ENCODE measurements at regions of chr10 and their contacts with region 1.

Region 1: GRCh38 chr10:24784061-24784460 is 60.4 kb upstream of the ARHGAP21 start:
- DNase-seq: peak; percentile 72 to 98 (median 88)

Region 2: DNA sequence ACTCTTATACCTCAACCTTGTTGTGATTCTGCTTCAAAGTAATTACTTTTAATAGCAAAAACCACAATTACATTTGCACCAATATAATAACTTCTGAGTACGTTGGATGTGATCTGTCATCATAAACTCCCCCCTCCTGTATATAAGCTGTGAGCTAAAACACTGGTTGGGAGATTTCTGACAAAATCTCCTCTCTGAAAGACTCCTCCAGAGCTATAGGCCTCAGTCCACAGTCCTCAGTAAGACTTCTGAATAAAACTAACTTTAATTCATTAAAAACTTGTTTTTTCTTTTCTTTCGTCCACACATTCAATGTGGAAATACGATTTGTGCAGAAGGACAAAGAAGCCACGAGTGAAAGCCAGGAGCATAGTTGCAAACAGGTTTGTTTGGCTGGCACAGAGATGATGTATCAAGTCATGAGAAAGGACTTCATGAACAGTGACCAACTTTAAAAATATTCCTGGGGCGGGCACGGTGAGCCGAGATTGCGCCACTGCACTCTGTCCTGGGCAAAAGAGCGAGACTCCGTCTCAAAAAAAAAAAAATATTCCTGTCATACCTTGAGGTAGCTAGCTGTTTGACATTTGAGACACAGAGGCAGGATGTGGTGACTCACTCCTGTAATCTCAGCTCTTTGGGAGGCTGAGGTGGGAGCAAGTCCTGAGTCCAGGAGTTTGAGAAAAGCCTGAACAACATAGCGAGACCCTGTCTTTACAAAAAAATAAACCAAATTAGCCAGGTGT is 30.7 kb after region 1 on chr10:
- intact Hi-C with region 1: loop called (anchors 2 kb)
- DNase-seq: no peak

Region 3: DNA sequence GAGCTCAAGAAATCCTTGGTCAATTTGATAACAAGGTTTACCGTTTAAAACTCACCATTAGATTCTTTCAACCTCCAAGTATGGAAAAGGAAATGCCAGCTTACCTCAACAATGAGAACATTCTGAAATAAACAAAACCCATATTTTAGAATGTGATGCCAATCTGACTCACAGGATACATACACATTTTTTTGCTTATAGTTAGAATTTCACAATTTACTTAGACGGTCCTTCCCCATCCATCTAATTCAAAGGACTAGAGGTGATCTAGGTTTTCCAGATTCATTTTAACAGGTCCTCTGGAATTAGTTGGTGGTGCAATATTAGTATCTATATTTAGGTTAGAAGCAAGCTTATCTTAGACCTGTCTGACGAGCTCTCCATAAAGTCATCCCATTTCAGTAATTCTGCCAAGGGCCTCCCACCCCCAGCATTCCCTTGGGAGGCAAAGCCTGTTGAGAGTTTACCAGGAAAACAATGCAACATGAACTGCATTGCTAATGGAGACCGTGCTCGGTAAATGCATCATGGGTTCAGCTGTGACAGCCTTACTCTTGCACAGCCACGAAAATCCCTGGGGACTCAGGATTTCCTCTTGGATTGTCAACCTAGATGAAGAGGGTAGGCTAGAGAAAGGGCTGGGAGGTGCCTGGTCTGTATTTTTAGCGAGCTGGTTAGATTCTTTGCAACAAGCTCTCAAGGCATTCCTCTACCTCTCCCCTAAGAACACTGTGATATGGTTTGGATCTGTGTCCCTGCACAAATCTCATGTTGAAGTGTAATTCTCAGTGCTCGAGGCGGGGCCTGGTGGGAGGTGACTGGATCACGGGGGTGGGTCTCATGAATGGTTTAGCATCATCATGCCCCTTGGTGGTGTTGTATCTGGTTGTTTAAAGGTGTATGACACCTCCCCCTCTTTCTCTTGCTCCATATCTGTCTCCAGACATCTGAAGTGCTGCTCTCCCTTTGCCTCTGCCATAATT is 74.5 kb after region 1 on chr10:
- intact Hi-C with region 1: no loop called
- DNase-seq: no peak

Region 4: DNA sequence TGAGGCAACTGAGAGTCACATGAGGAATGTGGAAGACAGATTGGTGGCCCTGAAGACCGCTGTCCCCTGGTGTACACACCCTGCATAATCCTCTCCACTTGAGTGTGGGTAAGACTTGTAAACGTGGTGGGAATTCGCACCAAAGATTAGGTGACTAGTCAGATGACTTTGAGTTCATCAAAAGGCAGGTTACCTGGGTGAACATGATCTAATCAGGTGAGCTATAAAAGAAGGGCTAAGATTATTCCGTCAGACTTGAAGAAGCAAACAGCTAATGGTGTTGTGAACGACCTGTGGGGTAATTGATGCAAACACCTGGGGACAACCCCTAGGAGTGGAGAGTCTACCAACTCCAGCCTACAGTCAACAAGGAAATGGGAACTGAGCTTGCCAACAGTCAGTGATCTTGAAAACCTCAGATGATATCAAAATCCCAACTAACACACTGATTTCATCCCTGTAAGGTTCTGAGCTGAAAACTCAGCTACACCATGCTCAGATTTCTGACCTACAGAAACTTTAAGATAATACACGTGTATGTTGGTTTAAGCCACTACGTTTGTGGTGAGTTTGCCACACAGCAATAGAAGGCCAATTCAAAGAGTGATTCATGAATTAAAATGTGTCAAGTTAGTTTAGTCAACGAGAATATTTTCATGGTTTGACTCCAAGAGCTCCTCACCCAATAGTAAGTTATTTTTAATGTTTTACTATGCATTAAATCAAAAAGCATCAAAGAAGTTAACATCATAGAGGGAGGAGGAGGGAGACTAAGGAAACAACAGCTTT is 151.6 kb after region 1 on chr10:
- intact Hi-C with region 1: no loop called
- DNase-seq: no peak

Measured in posterior cingulate gyrus (tissue), 11 donors.